ENCODE measurements at regions of chr21 and their contacts with region 1.

Region 1: DNA sequence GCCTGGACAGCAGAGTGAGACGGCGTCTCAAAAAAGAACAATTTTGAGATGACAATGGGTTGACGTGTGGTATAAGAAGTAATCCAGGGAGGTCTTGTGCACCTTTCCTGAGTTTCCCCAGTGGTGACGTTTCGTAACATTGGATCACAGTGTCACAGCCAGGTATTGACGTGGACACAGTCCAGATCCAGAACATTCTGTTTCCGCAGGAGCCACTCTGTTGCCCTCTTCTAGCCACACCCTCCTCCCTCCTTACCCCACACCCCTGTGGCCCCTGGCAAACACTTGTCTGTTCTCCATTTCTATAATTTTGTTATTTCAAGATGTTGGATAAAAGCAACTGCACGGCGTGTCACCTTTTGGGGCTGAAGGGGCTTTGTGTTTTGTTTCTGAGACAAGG is 6.5 kb upstream of the TRAPPC10 start:
- DNase-seq: no peak
- ATAC-seq: no peak

Region 2: DNA sequence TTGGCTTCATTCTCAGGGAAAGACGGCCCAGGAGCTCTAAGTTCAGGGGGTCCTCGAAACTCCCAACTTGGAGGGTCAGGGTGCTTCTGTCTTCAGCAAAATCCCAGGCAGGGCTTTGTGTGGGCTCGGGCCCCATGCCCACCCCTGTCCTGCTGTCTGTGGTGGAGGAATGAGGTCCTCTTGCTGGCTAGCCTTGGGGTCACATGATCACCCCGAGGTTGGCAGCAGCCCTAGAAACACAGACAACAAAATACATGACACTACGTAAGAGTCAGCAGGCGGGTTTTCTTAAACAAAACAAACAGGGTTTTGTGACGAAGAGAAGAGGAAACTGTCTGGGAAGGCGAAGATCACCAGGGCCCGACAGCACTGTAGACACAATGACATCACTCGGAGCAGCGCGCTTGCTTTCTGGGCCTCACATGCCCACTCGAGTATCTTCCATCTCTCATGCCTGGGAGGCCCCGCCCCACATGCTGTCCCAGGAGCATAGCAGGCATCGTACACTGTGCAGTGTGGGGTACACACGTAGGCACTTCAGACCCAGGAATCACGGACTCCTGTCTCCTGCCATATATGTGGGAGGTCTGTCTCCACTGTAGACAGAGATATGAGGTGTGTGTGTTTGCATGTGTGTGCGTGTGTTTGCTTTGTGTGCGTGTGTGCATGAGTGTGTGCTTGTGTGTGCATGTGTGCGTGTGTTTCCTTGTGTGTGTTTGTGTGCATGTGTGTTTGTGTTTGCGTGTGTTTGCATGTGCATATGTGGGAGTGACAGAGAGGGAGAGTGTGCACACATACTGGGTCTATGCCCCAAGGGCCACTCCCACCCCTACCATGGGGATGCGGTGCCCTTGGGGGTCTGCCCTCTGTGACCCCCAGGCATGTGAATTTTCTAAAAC is 673.4 kb before region 1 on chr21:
- intact Hi-C with region 1: no loop called
- DNase-seq: peak; percentile 68
- ATAC-seq: peak; percentile 30

Region 3: GRCh38 chr21:43916691-43917514 is 88.7 kb before region 1 on chr21:
- intact Hi-C with region 1: no loop called
- DNase-seq: no peak
- ATAC-seq: peak; percentile 41

Region 4: DNA sequence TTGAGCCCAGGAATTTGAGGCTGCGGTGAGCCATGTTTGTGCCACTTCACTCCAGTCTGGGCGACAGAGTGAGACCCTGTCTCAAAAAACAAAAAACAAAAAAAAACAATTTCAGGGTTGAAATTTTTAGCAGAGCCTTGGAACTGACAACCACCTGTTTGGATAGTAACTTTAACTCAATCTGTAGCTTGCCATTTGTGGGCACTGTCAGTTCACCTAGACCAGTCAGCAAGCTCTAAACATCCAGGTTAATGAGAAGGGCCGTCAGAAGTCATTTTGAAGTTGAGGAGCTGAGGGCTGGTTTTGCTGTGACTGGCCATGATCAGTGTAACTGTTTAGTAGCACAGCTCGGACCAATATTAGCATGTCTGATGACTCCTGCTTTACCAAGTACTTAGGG is 15.0 kb after region 1 on chr21:
- intact Hi-C with region 1: loop called (anchors 2 kb)
- DNase-seq: no peak
- ATAC-seq: no peak